Activated B cell treated with CpG ODN at 0.5 μM for 24 hours (primary cell): ENCODE measurements at regions of chr3 and their contacts with region 1.

Region 1: GRCh38 chr3:141875374-141875892 is 1.0 kb upstream of the ATP1B3 start:
- DNase-seq: peak; percentile 72
- ATAC-seq: peak; percentile 64
- H3K4me3 Mint-ChIP-seq: peak overlapping the region; percentile 93
- H3K27ac Mint-ChIP-seq: peak overlapping the region; percentile 93
- H3K4me1 Mint-ChIP-seq: peaks cover 28% of the 10 kb centered on the region
- H3K27me3 Mint-ChIP-seq: no peaks in the 10 kb centered on the region
- CTCF ChIP-seq: no peak

Region 2: GRCh38 chr3:140941434-140942220 is 933.8 kb before region 1 on chr3 and contains the start of gene SLC25A36:
- CTCF ChIA-PET with region 1: no interaction called
- POLR2A ChIA-PET with region 1: no interaction called
- intact Hi-C with region 1: loop called (anchors 5 kb)
- DNase-seq: peak; percentile 86
- ATAC-seq: peak; percentile 96
- H3K4me3 Mint-ChIP-seq: peak within 1 kb of the TSS; percentile 96
- H3K27ac Mint-ChIP-seq: peak within 1 kb of the TSS; percentile 96
- H3K4me1 Mint-ChIP-seq: peaks cover 37% of the 10 kb centered on the region
- H3K27me3 Mint-ChIP-seq: no peaks in the 10 kb centered on the region
- CTCF ChIP-seq: no peak
- total RNA-seq, gene SLC25A36: 40.4 and 45.7 TPM in 2 replicates

Region 3: DNA sequence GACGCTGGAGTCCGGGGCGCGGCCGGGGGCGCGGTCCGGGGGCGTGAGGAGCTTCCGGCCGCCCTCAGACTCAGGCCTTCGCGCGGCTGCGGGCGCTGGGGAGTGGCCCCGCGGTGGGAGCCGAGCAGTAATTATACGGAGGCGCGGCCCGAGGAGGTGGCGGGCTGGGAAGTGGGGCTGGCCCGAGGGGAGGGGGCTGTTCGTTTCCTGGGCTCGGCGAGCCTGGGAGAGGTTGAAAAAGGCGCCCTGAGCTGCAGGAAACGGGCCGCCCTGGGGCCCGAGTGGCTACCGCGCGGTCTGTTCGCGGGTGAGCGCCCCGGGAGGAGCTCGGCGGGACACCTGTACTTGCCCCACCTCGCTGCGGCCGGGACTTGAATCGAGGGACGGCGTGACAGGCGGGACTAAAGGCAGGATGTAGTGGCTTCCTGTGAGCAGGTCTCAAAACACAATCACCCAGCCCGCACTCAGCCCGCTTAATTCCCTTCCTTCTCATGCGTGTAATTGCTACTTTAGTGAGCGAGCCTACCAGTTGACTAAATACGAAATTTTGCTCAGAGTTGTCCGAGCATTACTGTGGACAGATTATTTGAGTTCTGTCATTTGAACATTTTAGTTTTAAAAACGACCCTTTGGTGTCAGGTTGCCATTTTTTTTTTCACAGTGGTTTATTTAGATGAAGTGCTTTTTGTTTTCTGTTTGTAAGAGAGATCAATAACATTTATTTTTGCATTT is 387.7 kb before region 1 on chr3:
- CTCF ChIA-PET with region 1: no interaction called
- POLR2A ChIA-PET with region 1: interaction called, 6 read pairs
- intact Hi-C with region 1: loop called (anchors 1 kb)
- DNase-seq: no peak
- ATAC-seq: peak; percentile 73
- H3K4me3 Mint-ChIP-seq: peak overlapping the region; percentile 84
- H3K27ac Mint-ChIP-seq: peak overlapping the region; percentile 92
- H3K4me1 Mint-ChIP-seq: peaks cover 76% of the 10 kb centered on the region
- H3K27me3 Mint-ChIP-seq: no peaks in the 10 kb centered on the region
- CTCF ChIP-seq: no peak

Region 4: DNA sequence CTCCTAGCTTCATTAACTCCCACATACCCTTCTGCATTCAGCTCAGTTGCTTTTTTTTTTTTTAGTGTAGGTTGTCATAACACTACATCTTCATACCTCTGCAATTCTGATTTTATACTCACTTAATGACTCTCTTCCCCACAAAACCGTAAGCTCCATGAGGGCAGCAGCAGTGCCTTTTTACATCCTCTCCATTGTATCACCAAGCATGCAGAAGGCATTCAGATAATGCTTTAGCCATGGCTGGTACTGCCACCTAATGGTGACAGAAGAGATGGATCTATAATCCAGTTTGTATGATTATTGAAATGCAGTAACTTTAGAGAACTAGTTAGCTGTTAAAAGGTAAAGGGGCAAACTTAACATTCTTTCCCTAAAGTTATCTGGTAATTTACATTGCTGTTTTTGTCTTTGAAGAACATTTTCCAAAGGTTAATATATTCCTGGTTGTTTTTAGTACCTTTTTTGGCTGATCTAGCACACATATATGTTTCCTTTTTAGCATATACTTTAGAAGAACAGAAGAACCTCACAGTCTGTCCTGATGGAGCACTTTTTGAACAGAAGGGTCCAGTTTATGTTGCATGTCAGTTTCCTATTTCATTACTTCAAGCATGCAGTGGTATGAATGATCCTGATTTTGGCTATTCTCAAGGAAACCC is 37.8 kb after region 1 on chr3:
- CTCF ChIA-PET with region 1: interaction called, 5 read pairs
- POLR2A ChIA-PET with region 1: interaction called, 5 read pairs
- intact Hi-C with region 1: loop called (anchors 2 kb)
- DNase-seq: no peak
- ATAC-seq: peak; percentile 58
- H3K4me3 Mint-ChIP-seq: no peak overlapping the region
- H3K27ac Mint-ChIP-seq: no peak overlapping the region
- H3K4me1 Mint-ChIP-seq: no peaks in the 10 kb centered on the region
- H3K27me3 Mint-ChIP-seq: no peaks in the 10 kb centered on the region
- CTCF ChIP-seq: peak; percentile 48

Region 5: GRCh38 chr3:141955175-141955574 is 79.7 kb after region 1 on chr3:
- CTCF ChIA-PET with region 1: no interaction called
- POLR2A ChIA-PET with region 1: no interaction called
- intact Hi-C with region 1: no loop called
- DNase-seq: no peak
- ATAC-seq: no peak
- H3K4me3 Mint-ChIP-seq: no peak overlapping the region
- H3K27ac Mint-ChIP-seq: no peak overlapping the region
- H3K4me1 Mint-ChIP-seq: peaks cover 5% of the 10 kb centered on the region
- H3K27me3 Mint-ChIP-seq: no peaks in the 10 kb centered on the region
- CTCF ChIP-seq: no peak

Region 6: GRCh38 chr3:142447852-142448823 is 572.7 kb after region 1 on chr3 and contains the start of gene XRN1:
- CTCF ChIA-PET with region 1: no interaction called
- POLR2A ChIA-PET with region 1: no interaction called
- intact Hi-C with region 1: loop called (anchors 1 kb)
- DNase-seq: peak; percentile 96
- ATAC-seq: peak; percentile 97
- H3K4me3 Mint-ChIP-seq: peak within 1 kb of the TSS; percentile 97
- H3K27ac Mint-ChIP-seq: peak within 1 kb of the TSS; percentile 98
- H3K4me1 Mint-ChIP-seq: peaks cover 44% of the 10 kb centered on the region
- H3K27me3 Mint-ChIP-seq: no peaks in the 10 kb centered on the region
- CTCF ChIP-seq: no peak
- total RNA-seq, gene XRN1: 55.0 and 63.0 TPM in 2 replicates

Region 7: DNA sequence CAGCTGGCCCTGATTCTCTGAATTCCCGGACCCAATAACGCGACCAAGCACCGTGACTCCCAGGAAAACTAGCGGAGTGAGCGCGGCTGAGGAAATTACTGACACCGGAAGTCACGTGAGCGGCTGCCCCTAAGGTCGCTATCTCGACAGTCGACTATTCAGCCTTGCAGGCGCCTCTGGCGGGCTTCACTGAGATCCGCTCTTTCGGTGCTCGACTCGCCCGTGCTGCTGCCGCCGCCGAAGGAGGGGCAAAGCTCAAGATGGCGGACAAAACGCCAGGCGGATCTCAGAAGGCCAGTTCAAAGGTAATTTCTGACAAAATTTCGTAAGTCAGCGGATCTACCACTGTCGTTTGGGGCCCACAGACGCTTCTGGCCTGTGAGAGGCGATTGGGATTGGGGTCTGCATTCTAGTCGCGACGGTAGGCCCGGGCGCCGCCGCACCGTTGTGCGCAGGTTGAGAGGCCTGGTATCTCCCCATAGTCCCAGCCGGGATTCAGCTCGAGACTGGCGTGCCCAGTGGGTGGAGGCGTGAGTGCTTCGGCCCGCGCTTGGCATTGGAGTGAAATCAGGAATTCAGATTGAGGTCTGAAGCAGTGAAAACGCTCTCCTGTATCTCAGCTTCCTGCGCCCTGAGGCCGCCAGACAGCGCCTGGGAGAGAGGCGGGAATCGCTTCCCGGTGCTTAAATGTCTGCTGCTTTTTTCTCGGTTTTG is 1126.1 kb after region 1 on chr3 and contains the start of gene U2SURP:
- CTCF ChIA-PET with region 1: no interaction called
- POLR2A ChIA-PET with region 1: interaction called, 3 read pairs
- intact Hi-C with region 1: loop called (anchors 5 kb)
- DNase-seq: peak; percentile 74
- ATAC-seq: peak; percentile 93
- H3K4me3 Mint-ChIP-seq: peak within 1 kb of the TSS; percentile 99
- H3K27ac Mint-ChIP-seq: peak within 1 kb of the TSS; percentile 98
- H3K4me1 Mint-ChIP-seq: peaks cover 41% of the 10 kb centered on the region
- H3K27me3 Mint-ChIP-seq: no peaks in the 10 kb centered on the region
- CTCF ChIP-seq: no peak
- total RNA-seq, gene U2SURP: 117 and 131 TPM in 2 replicates